ENCODE measurements at regions of chr5 and their contacts with region 1.

Region 1: GRCh38 chr5:125412561-125413495 is 666.4 kb upstream of the ZNF608 start:
- DNase-seq: peak; percentile 73
- H3K4me3 ChIP-seq: peak overlapping the region; percentile 22 to 31; a peak in 3 of 4 replicates
- H3K27ac ChIP-seq: peak overlapping the region; percentile 93 to 98
- H3K4me1 ChIP-seq: peaks cover 51 to 58% of the 10 kb centered on the region in 2 experiments
- H3K27me3 ChIP-seq: no peaks in the 10 kb centered on the region
- CTCF ChIP-seq: peak; percentile 59
- EP300 ChIP-seq: peak in 1 of 2 experiments; percentile 92; a peak in 3 of 4 replicates
- RAD21 ChIP-seq: peak; percentile 84

Region 2: DNA sequence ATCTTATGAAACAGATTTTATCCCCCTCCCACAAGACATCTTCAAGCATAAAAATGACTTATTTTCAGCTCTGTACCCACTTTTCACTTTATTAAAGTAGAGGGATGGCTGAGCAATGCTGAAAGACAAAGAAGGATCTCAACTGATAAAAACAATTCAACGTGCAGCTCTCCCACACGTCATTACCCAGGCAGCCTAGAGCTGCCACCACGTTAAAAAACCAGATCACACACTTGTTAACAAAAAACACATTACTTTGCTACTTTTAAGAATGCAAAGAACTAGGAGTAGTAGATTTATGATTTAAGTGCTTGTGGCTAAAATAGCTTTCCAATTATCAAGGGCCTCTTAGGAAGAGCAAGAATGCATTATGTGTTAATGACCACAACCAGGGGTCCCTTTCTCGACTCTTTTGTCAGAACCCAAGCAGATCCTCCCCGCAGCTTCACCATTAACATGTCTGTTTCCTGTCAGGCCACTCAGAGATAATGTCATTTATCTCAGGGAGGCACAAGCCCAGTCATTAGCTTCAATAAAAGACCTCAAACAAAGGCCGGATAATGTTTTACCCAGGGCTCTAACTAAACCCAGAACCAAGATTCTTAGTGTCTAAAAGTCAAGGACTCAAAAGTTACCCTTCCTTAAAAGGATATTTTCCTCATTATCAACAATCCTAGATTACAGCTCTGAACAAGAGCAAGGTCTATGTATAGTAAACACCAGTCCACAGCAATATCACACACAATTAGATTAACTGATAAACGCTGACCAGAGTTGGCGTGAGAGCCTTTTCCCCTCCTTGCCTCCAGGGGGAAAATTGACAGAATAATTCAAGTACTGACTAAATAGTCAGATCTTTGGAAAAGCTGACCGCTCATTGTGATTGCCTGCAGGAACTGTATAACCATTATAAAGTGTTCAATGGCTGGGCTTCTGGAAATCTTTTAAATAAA is 673.9 kb before region 1 on chr5:
- CTCF ChIA-PET with region 1: interaction called, 7 read pairs
- POLR2A ChIA-PET with region 1: interaction called, 19 read pairs
- DNase-seq: peak; percentile 81
- H3K4me3 ChIP-seq: no peak overlapping the region
- H3K27ac ChIP-seq: peak overlapping the region; percentile 4 to 95; a peak in 2 of 4 replicates
- H3K4me1 ChIP-seq: peaks cover 16 to 55% of the 10 kb centered on the region in 2 experiments; a peak in 3 of 4 replicates
- H3K27me3 ChIP-seq: no peaks in the 10 kb centered on the region
- CTCF ChIP-seq: peak; percentile 40
- EP300 ChIP-seq: peak in 1 of 2 experiments; percentile 86; a peak in 2 of 4 replicates
- RAD21 ChIP-seq: peak; percentile 43

Region 3: GRCh38 chr5:125198270-125198974 is 214.4 kb before region 1 on chr5:
- CTCF ChIA-PET with region 1: no interaction called
- POLR2A ChIA-PET with region 1: interaction called, 12 read pairs
- DNase-seq: peak; percentile 56
- H3K4me3 ChIP-seq: no peak overlapping the region
- H3K27ac ChIP-seq: peak overlapping the region; percentile 28 to 78; a peak in 3 of 4 replicates
- H3K4me1 ChIP-seq: peaks cover 11 to 48% of the 10 kb centered on the region in 2 experiments
- H3K27me3 ChIP-seq: no peaks in the 10 kb centered on the region
- CTCF ChIP-seq: no peak
- EP300 ChIP-seq: peak; percentile 66 to 86; a peak in 3 of 4 replicates
- RAD21 ChIP-seq: peak; percentile 35

Region 4: GRCh38 chr5:125232779-125233230 is 180.0 kb before region 1 on chr5:
- CTCF ChIA-PET with region 1: interaction called, 6 read pairs
- POLR2A ChIA-PET with region 1: interaction called, 21 read pairs
- DNase-seq: peak; percentile 61
- H3K4me3 ChIP-seq: no peak overlapping the region
- H3K27ac ChIP-seq: peak overlapping the region; percentile 85 to 88
- H3K4me1 ChIP-seq: peaks cover 3 to 13% of the 10 kb centered on the region in 2 experiments; a peak in 2 of 4 replicates
- H3K27me3 ChIP-seq: no peaks in the 10 kb centered on the region
- CTCF ChIP-seq: no peak
- EP300 ChIP-seq: peak; percentile 99
- RAD21 ChIP-seq: peak; percentile 46; the same call in 1 of the 2 replicates

Region 5: GRCh38 chr5:125326150-125326510 is 86.7 kb before region 1 on chr5:
- CTCF ChIA-PET with region 1: interaction called, 5 read pairs
- POLR2A ChIA-PET with region 1: interaction called, 15 read pairs
- DNase-seq: peak; percentile 47
- H3K4me3 ChIP-seq: no peak overlapping the region
- H3K27ac ChIP-seq: peak overlapping the region; percentile 30 to 86; a peak in 3 of 4 replicates
- H3K4me1 ChIP-seq: peaks cover 14 to 25% of the 10 kb centered on the region in 2 experiments; a peak in 3 of 4 replicates
- H3K27me3 ChIP-seq: no peaks in the 10 kb centered on the region
- CTCF ChIP-seq: no peak
- EP300 ChIP-seq: peak; percentile 93 to 97
- RAD21 ChIP-seq: peak; percentile 55; the same call in 1 of the 2 replicates

Region 6: GRCh38 chr5:125365747-125366146 is 47.1 kb before region 1 on chr5:
- CTCF ChIA-PET with region 1: no interaction called
- POLR2A ChIA-PET with region 1: no interaction called
- DNase-seq: no peak
- H3K4me3 ChIP-seq: no peak overlapping the region
- H3K27ac ChIP-seq: no peak overlapping the region
- H3K4me1 ChIP-seq: peaks cover 0 to 5% of the 10 kb centered on the region in 2 experiments; a peak in 2 of 4 replicates
- H3K27me3 ChIP-seq: no peaks in the 10 kb centered on the region
- CTCF ChIP-seq: no peak
- EP300 ChIP-seq: no peak
- RAD21 ChIP-seq: no peak

Region 7: DNA sequence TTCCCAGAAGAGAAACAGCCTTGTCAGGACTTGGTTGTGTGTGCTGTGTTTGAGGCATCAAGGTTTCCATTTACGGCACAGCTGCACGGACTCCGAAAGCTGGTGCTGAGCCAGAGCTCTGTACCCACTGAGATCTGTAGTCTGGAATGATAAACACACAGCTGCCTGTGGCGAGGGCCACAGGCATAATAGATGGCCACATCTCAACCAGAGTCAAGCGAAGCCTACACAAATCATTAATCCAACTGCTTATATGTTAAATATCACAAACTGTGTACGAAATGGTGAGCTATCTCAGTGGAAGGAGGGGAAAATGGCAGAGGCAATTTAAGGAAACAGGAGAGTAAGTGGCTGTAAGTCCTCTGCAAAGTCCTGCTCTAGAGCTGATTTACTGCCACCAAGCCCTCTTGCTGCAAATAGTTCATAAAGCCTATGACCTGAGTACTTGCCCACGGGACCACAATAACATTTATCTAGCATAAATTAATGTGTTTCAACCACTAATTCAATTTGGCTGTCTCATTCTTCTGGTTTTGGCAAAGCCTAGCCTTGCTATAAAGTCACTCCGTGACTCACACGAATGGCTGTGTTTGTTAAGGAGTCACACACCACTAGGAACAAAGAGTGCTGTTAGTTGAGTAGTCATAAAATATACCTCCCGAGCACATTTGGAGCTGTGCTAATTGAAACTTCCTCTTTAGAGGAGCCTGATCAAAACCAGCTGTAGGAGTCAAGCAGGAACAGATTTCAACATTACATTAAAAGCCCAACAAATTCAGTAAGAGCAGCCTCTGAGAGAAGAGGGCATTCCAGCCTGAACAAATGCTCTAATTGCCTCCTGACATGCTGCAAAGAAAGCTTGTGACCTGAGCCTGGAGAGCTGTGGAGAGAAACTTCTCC is 72.2 kb after region 1 on chr5:
- CTCF ChIA-PET with region 1: interaction called, 16 read pairs
- POLR2A ChIA-PET with region 1: interaction called, 64 read pairs
- DNase-seq: peak; percentile 32
- H3K4me3 ChIP-seq: peak overlapping the region; percentile 9 to 29
- H3K27ac ChIP-seq: peak overlapping the region; percentile 83 to 100
- H3K4me1 ChIP-seq: peaks cover 29 to 64% of the 10 kb centered on the region in 2 experiments; a peak in 3 of 4 replicates
- H3K27me3 ChIP-seq: no peaks in the 10 kb centered on the region
- CTCF ChIP-seq: no peak
- EP300 ChIP-seq: peak; percentile 94 to 100
- RAD21 ChIP-seq: peak; percentile 45; the same call in 1 of the 2 replicates